Caco-2 (cell line): ENCODE measurements at regions of chr16 and their contacts with region 1.

Region 1: GRCh38 chr16:53266156-53266555 is 168.1 kb upstream of the RBL2 start:
- DNase-seq: no peak
- H3K4me3 ChIP-seq: no peak overlapping the region
- H3K4me3 Mint-ChIP-seq: no peak overlapping the region
- H3K27ac Mint-ChIP-seq: no peak overlapping the region
- H3K4me1 ChIP-seq: no peaks in the 10 kb centered on the region
- H3K4me1 Mint-ChIP-seq: no peaks in the 10 kb centered on the region
- H3K27me3 ChIP-seq: no peaks in the 10 kb centered on the region
- H3K27me3 Mint-ChIP-seq: no peaks in the 10 kb centered on the region
- CTCF ChIP-seq: no peak

Region 2: GRCh38 chr16:53415504-53415903 is 149.3 kb after region 1 on chr16:
- CTCF ChIA-PET with region 1: no interaction called
- POLR2A ChIA-PET with region 1: no interaction called
- intact Hi-C with region 1: loop called (anchors 2 kb)
- DNase-seq: peak; percentile 53 to 59
- H3K4me3 ChIP-seq: no peak overlapping the region
- H3K4me3 Mint-ChIP-seq: no peak overlapping the region
- H3K27ac Mint-ChIP-seq: no peak overlapping the region
- H3K4me1 ChIP-seq: no peaks in the 10 kb centered on the region
- H3K4me1 Mint-ChIP-seq: no peaks in the 10 kb centered on the region
- H3K27me3 ChIP-seq: no peaks in the 10 kb centered on the region
- H3K27me3 Mint-ChIP-seq: no peaks in the 10 kb centered on the region
- CTCF ChIP-seq: peak; percentile 47 to 60